Activated CD4-positive, alpha-beta T cell treated with anti-CD3 and anti-CD28 coated beads for 36 hours (primary cell): ENCODE measurements at regions of chr4 and their contacts with region 1.

Region 1: DNA sequence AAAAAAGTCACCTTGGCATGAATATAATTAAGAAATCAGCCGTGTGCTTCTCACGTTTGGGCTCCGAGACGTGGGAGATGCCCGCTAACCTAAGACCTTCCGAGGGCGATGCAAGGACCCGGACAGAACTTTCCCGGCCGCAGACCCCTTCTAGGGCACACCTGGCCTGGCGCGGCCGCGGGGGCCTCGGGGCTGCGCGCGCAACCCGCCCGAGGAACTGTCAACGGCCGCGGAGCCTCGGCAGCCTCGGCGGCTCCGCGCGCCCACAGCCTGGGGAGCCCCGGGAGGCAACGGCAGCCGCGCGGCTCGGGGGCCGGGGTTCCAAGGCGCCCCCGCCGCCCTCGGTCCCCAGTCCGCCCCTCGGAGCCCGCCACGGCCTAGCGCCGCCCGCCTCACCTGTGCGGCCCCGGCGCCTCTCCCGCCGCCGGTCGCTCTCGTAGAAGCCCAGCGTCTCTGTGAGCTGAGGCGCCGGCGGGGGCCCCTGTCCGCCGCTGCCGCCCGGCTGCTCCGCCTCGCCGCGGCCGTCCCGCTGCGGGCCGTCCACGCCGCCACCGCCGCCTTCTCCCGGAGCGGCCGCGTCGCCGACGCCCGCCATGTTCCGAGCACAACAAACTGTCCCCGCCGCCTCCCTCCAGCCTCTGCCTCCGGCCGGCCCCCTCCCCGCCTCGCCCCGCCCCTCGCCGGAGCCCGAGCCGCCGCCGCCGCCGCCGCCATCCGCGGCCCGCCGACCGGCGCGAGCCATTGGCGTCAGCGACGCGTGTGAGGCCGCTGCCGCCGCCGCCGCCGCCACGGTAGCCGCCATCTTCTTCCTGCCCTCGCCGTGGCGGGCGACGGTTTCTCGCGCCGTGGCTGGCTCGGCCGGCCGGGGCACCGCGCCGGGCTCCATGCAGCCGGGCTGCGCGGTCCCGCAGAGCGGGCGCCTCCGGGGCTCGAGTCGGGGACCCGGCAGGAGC is at the start of gene TAPT1:
- DNase-seq: peak; percentile 89
- ATAC-seq: peak; percentile 80
- H3K4me3 Mint-ChIP-seq: peak within 1 kb of the TSS; percentile 90
- H3K27ac Mint-ChIP-seq: peak within 1 kb of the TSS; percentile 98
- H3K4me1 Mint-ChIP-seq: peaks cover 56% of the 10 kb centered on the region
- H3K27me3 Mint-ChIP-seq: no peaks in the 10 kb centered on the region
- total RNA-seq, gene TAPT1: 32.6 to 34.4 TPM

Region 2: GRCh38 chr4:15681207-15682015 is 544.7 kb before region 1 on chr4 and contains the start of gene FAM200B:
- CTCF ChIA-PET with region 1: no interaction called
- POLR2A ChIA-PET with region 1: no interaction called
- intact Hi-C with region 1: loop called in 1 of 2 experiments (anchors 2 kb)
- DNase-seq: peak; percentile 99
- ATAC-seq: peak; percentile 98
- H3K4me3 Mint-ChIP-seq: peak within 1 kb of the TSS; percentile 98
- H3K27ac Mint-ChIP-seq: peak within 1 kb of the TSS; percentile 96
- H3K4me1 Mint-ChIP-seq: peaks cover 39% of the 10 kb centered on the region
- H3K27me3 Mint-ChIP-seq: no peaks in the 10 kb centered on the region
- total RNA-seq, gene FAM200B: 9.8 to 13.3 TPM

Region 3: GRCh38 chr4:15778289-15779241 is 447.6 kb before region 1 on chr4 and contains the start of gene CD38:
- CTCF ChIA-PET with region 1: no interaction called
- POLR2A ChIA-PET with region 1: no interaction called
- intact Hi-C with region 1: loop called (anchors 5 to 10 kb)
- DNase-seq: peak; percentile 76
- ATAC-seq: peak; percentile 76
- H3K4me3 Mint-ChIP-seq: peak within 1 kb of the TSS; percentile 84
- H3K27ac Mint-ChIP-seq: peak within 1 kb of the TSS; percentile 86
- H3K4me1 Mint-ChIP-seq: peaks cover 70% of the 10 kb centered on the region
- H3K27me3 Mint-ChIP-seq: peaks cover 30% of the 10 kb centered on the region
- total RNA-seq, gene CD38: 15.0 to 17.3 TPM

Region 4: GRCh38 chr4:16264798-16265197 is 38.7 kb after region 1 on chr4:
- CTCF ChIA-PET with region 1: interaction called, 8 read pairs
- POLR2A ChIA-PET with region 1: no interaction called
- intact Hi-C with region 1: loop called (anchors 1 to 5 kb)
- DNase-seq: no peak
- ATAC-seq: peak; percentile 66
- H3K4me3 Mint-ChIP-seq: no peak overlapping the region
- H3K27ac Mint-ChIP-seq: no peak overlapping the region
- H3K4me1 Mint-ChIP-seq: peaks cover 19% of the 10 kb centered on the region
- H3K27me3 Mint-ChIP-seq: no peaks in the 10 kb centered on the region

Region 5: DNA sequence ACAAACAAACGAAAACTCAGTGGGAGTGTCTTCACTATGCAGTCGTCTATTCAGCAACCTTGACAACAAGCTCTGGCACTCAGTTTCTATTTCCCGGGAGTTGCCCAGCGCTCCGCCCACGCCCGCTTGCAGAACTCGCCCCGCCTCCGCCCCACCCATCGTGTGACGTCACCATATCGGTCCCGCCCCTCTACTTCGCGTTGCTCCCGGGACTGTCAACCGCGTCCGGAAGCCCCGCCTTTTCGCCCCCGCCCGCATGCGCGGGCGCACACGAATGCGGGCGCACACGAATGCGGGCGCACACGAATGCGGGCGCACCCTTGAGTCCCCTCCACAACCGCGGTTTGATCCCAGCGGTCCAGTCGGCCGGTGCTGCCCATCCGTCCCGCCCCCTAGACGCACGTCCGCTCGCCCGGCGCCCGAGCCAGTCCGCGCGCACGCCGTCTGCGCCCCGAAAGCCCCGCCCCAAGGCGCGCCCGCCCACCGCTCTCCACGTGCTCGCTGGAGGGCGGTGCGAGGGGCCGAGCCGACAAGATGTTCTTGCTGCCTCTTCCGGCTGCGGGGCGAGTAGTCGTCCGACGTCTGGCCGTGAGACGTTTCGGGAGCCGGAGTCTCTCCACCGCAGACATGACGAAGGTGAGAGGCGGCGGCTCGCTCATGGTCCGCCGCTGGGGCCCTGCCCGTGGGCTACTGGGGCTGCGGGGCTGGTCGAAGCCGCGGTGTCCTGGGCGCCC is 1351.0 kb after region 1 on chr4 and contains the start of gene LAP3:
- CTCF ChIA-PET with region 1: no interaction called
- POLR2A ChIA-PET with region 1: no interaction called
- intact Hi-C with region 1: loop called in 1 of 2 experiments (anchors 1 kb)
- DNase-seq: peak; percentile 99
- ATAC-seq: peak; percentile 85
- H3K4me3 Mint-ChIP-seq: peak within 1 kb of the TSS; percentile 91
- H3K27ac Mint-ChIP-seq: peak within 1 kb of the TSS; percentile 94
- H3K4me1 Mint-ChIP-seq: peaks cover 29% of the 10 kb centered on the region
- H3K27me3 Mint-ChIP-seq: no peaks in the 10 kb centered on the region
- total RNA-seq, gene LAP3: 126 to 128 TPM

Region 6: GRCh38 chr4:17810260-17811077 is 1584.3 kb after region 1 on chr4 and contains the starts of genes DCAF16 and NCAPG:
- CTCF ChIA-PET with region 1: no interaction called
- POLR2A ChIA-PET with region 1: no interaction called
- intact Hi-C with region 1: loop called in 1 of 2 experiments (anchors 2 kb)
- DNase-seq: peak; percentile 99
- ATAC-seq: peak; percentile 91
- H3K4me3 Mint-ChIP-seq: peak within 1 kb of the TSS; percentile 98
- H3K27ac Mint-ChIP-seq: peak within 1 kb of the TSS; percentile 100
- H3K4me1 Mint-ChIP-seq: peaks cover 42% of the 10 kb centered on the region
- H3K27me3 Mint-ChIP-seq: no peaks in the 10 kb centered on the region
- total RNA-seq, gene DCAF16: 40.3 to 47.5 TPM
- total RNA-seq, gene NCAPG: 73.8 to 82.8 TPM